ENCODE measurements at regions of chr12 and their contacts with region 1.

Region 1: GRCh38 chr12:7018350-7019042 is at the start of gene LPCAT3:
- DNase-seq: peak; percentile 91 to 93 (median 92)
- H3K4me3 ChIP-seq: peak within 1 kb of the TSS; percentile 72 to 99 (median 85)
- H3K4me3 Mint-ChIP-seq: peak within 1 kb of the TSS; percentile 96 to 97
- H3K27ac ChIP-seq: peak within 1 kb of the TSS; percentile 73 to 86
- H3K27ac Mint-ChIP-seq: peak within 1 kb of the TSS; percentile 90 to 98 (median 96)
- H3K4me1 ChIP-seq: peaks cover 24 to 40% of the 10 kb centered on the region in 2 donors
- H3K4me1 Mint-ChIP-seq: peaks cover 45% of the 10 kb centered on the region
- H3K27me3 ChIP-seq: no peaks in the 10 kb centered on the region
- H3K27me3 Mint-ChIP-seq: peaks cover 0 to 2% (median 0%) of the 10 kb centered on the region in 3 donors
- CTCF ChIP-seq: peak; percentile 87
- polyA plus RNA-seq, gene LPCAT3: 50.9 to 62.7 (median 54.1) TPM

Region 2: GRCh38 chr12:6953442-6954315 is 64.8 kb before region 1 on chr12:
- intact Hi-C with region 1: loop called in 1 of 2 experiments (anchors 5 kb)
- DNase-seq: peak; percentile 86 to 89 (median 89)
- H3K4me3 ChIP-seq: peak overlapping the region; percentile 61 to 99 (median 98)
- H3K4me3 Mint-ChIP-seq: peak overlapping the region; percentile 97 to 99
- H3K27ac ChIP-seq: peak overlapping the region; percentile 87 to 95
- H3K27ac Mint-ChIP-seq: peak overlapping the region; percentile 93 to 98 (median 96)
- H3K4me1 ChIP-seq: peaks cover 77 to 84% of the 10 kb centered on the region in 2 donors
- H3K4me1 Mint-ChIP-seq: peaks cover 73% of the 10 kb centered on the region
- H3K27me3 ChIP-seq: no peaks in the 10 kb centered on the region
- H3K27me3 Mint-ChIP-seq: peaks cover 0 to 3% (median 0%) of the 10 kb centered on the region in 3 donors
- CTCF ChIP-seq: no peak

Region 3: DNA sequence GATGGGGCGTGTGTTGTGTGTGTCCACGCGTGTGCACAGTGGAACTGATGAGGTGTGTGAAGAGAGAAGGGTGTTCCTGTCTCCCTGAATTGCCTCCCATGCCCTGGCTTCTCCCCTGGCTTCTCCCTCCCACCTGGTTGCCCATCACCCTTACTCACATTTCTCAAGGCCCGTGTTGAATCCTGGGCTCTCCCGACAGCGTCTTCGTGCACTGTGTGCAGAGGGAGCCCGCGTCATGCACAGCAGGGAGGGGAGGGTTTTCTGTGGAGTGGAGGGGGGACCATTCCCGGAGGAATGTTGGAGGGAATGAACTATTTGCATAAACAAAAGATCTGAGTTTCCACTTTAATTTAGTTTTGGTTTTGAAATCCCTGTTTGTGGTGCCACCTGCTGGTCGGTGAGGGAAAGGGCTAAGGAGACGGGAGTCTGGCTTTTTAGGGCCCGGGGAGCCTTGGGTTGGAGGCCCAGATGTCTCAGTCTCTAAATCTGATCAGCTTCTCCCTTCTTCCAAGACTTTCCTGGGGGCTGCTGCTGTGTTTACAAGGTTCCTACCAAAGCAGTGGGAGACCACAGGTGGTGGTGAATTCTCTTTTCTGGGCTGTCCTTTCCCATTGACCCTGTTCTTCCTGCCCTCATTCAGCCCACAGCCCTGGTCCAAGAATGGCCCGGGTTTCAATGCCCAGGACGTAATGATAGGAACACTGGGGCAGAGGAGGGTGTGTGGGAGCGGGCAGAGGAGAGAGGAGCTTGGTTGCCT is 73.9 kb after region 1 on chr12 and contains the start of gene C1R:
- intact Hi-C with region 1: loop called in 1 of 2 experiments (anchors 10 kb)
- DNase-seq: peak; percentile 29 to 49 (median 41)
- H3K4me3 ChIP-seq: peak within 1 kb of the TSS; percentile 36 to 79 (median 62)
- H3K4me3 Mint-ChIP-seq: peak within 1 kb of the TSS; percentile 89 to 98
- H3K27ac ChIP-seq: peak within 1 kb of the TSS in 1 of 2 donors; percentile 55
- H3K27ac Mint-ChIP-seq: peak within 1 kb of the TSS in 5 of 7 donors; percentile 71 to 91 (median 80)
- H3K4me1 ChIP-seq: peaks cover 0 to 3% of the 10 kb centered on the region in 2 donors
- H3K4me1 Mint-ChIP-seq: peaks cover 9% of the 10 kb centered on the region
- H3K27me3 ChIP-seq: peaks cover 0 to 2% of the 10 kb centered on the region in 2 donors
- H3K27me3 Mint-ChIP-seq: peaks cover 6 to 17% (median 12%) of the 10 kb centered on the region in 3 donors
- CTCF ChIP-seq: peak; percentile 90
- polyA plus RNA-seq, gene C1R: 0.14 to 0.88 TPM in 2 of 3 donors, not detected in the other

Region 4: DNA sequence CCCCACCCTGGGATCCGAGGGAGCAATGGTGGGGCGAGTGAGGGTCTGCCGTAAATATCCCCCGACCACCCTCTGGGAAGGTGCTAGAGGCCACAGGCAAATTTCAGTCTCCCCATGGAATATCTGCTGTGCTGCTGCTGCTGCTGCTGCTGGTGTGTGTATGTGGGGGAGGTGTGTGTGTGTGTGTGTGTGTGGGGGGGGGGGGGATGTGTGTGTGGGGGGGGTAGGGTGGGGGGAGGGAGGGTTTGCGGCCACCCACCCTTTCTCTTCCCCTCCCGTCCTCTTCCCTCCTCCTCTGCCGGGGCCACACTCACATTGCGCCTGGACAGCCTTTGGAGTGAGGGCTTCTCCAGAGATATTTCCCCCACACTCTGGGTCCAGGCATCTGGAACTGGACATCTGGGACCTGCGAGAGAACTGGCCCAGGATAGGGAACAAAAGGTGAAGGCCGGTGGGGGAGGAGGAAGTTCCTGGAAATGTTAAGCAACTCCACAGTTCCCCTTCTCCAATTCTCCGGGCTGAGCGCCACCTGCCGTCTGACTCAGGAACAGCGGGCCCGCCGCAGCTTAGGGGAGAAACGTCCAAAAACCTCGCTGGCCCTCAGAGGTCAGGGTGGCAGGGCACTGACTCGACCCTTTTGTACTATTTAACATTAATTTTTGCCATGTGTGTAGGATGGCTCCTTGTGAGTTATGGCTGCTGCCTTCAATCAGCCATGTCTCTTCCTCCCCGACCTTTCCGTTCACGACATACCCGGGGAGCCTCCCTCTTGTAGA is 90.5 kb after region 1 on chr12 and contains the start of gene C1RL:
- intact Hi-C with region 1: loop called in 1 of 2 experiments (anchors 10 kb)
- DNase-seq: peak; percentile 75 to 87 (median 85)
- H3K4me3 ChIP-seq: peak within 1 kb of the TSS; percentile 60 to 85 (median 79)
- H3K4me3 Mint-ChIP-seq: peak within 1 kb of the TSS; percentile 86 to 95
- H3K27ac ChIP-seq: peak within 1 kb of the TSS; percentile 72 to 77
- H3K27ac Mint-ChIP-seq: peak within 1 kb of the TSS; percentile 88 to 97 (median 92)
- H3K4me1 ChIP-seq: peaks cover 18 to 19% of the 10 kb centered on the region in 2 donors
- H3K4me1 Mint-ChIP-seq: peaks cover 33% of the 10 kb centered on the region
- H3K27me3 ChIP-seq: no peaks in the 10 kb centered on the region
- H3K27me3 Mint-ChIP-seq: peaks cover 0 to 2% (median 0%) of the 10 kb centered on the region in 3 donors
- CTCF ChIP-seq: peak; percentile 95
- polyA plus RNA-seq, gene C1RL: 4.8 to 27.9 (median 5.6) TPM